ENCODE measurements at regions of chr3 and their contacts with region 1.

Region 1: DNA sequence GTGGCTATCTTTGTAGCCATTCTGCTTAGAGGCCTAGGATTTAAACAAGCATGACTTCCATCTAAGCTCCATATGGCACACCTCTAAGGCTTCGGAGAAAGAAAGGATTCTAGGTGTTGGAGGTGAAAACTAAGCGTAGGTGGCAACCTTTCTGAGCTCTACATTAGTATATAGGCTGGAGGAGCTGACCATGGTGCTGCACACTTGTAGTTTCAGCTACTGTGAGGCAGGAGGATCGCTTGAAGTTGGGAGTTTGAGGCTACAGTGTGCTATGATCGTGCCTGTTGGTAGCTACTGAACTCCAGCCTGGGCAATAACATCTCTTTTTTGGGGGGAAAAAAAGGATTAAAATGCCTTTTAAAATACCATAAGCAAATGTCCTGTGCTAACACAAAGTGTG is 7.4 kb downstream of the EAF1 start:
- DNase-seq: no peak
- ATAC-seq: no peak

Region 2: DNA sequence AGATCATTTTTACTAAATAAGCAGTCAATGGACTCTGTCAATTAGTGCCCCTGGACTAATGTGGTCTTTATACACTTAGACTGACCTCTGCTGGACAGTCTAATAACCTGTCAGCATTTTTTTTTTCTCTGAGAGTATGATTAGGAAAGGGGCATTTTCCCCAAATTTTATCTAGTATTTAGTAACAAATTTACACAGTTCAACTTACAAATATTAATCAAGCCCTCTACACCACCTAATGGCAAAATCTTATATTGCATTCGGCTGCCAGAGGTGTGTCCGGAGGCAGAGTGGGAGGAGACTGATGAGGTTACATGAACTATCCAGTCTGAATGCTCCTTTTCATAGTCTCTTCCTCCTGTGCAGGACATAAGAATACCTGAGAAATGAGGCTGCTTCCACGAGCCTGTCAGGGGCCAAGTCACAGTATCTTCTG is 122.8 kb after region 1 on chr3:
- intact Hi-C with region 1: loop called (anchors 5 kb)
- DNase-seq: no peak
- ATAC-seq: peak; percentile 77

Measured in Right ventricle myocardium superior (tissue), 1 donor.